T-cell (primary cell): ENCODE measurements at regions of chr5 and their contacts with region 1.

Region 1: GRCh38 chr5:39740404-39740803 is 315.6 kb upstream of the DAB2 start:
- DNase-seq: no peak
- ATAC-seq: no peak
- H3K4me3 ChIP-seq: no peak overlapping the region
- H3K4me3 Mint-ChIP-seq: no peak overlapping the region
- H3K27ac ChIP-seq: no peak overlapping the region
- H3K27ac Mint-ChIP-seq: no peak overlapping the region
- H3K4me1 ChIP-seq: no peaks in the 10 kb centered on the region
- H3K4me1 Mint-ChIP-seq: no peaks in the 10 kb centered on the region
- H3K27me3 ChIP-seq: peaks cover 0 to 3% of the 10 kb centered on the region in 2 experiments
- H3K27me3 Mint-ChIP-seq: peaks cover 9 to 30% of the 10 kb centered on the region in 2 donors

Region 2: GRCh38 chr5:38191693-38192092 is 1548.7 kb before region 1 on chr5:
- CTCF ChIA-PET with region 1: no interaction called
- POLR2A ChIA-PET with region 1: interaction called in 1 of 2 experiments, 11 read pairs
- DNase-seq: no peak
- ATAC-seq: no peak
- H3K4me3 ChIP-seq: no peak overlapping the region
- H3K4me3 Mint-ChIP-seq: no peak overlapping the region
- H3K27ac ChIP-seq: no peak overlapping the region
- H3K27ac Mint-ChIP-seq: no peak overlapping the region
- H3K4me1 ChIP-seq: no peaks in the 10 kb centered on the region
- H3K4me1 Mint-ChIP-seq: peaks cover 0 to 5% (median 5%) of the 10 kb centered on the region in 3 donors
- H3K27me3 ChIP-seq: peaks cover 2 to 19% of the 10 kb centered on the region in 2 experiments
- H3K27me3 Mint-ChIP-seq: peaks cover 31 to 32% of the 10 kb centered on the region in 2 donors

Region 3: GRCh38 chr5:39194466-39195136 is 545.8 kb before region 1 on chr5:
- CTCF ChIA-PET with region 1: no interaction called
- POLR2A ChIA-PET with region 1: no interaction called
- DNase-seq: no peak
- ATAC-seq: no peak
- H3K4me3 ChIP-seq: peak overlapping the region; percentile 74 to 78
- H3K4me3 Mint-ChIP-seq: peak overlapping the region; percentile 74 to 95 (median 74)
- H3K27ac ChIP-seq: peak overlapping the region; percentile 72
- H3K27ac Mint-ChIP-seq: peak overlapping the region; percentile 94 to 98
- H3K4me1 ChIP-seq: peaks cover 48 to 65% of the 10 kb centered on the region in 2 experiments
- H3K4me1 Mint-ChIP-seq: peaks cover 72 to 76% (median 75%) of the 10 kb centered on the region in 3 donors
- H3K27me3 ChIP-seq: no peaks in the 10 kb centered on the region
- H3K27me3 Mint-ChIP-seq: no peaks in the 10 kb centered on the region

Region 4: GRCh38 chr5:39765366-39765765 is 25.0 kb after region 1 on chr5:
- CTCF ChIA-PET with region 1: no interaction called
- POLR2A ChIA-PET with region 1: no interaction called
- DNase-seq: no peak
- ATAC-seq: no peak
- H3K4me3 ChIP-seq: no peak overlapping the region
- H3K4me3 Mint-ChIP-seq: no peak overlapping the region
- H3K27ac ChIP-seq: no peak overlapping the region
- H3K27ac Mint-ChIP-seq: no peak overlapping the region
- H3K4me1 ChIP-seq: no peaks in the 10 kb centered on the region
- H3K4me1 Mint-ChIP-seq: no peaks in the 10 kb centered on the region
- H3K27me3 ChIP-seq: peaks cover 0 to 3% of the 10 kb centered on the region in 2 experiments
- H3K27me3 Mint-ChIP-seq: peaks cover 14 to 20% of the 10 kb centered on the region in 2 donors